ENCODE measurements at regions of chr4 and their contacts with region 1.

Region 1: GRCh38 chr4:163544407-163545038 is 50.0 kb downstream of the TMA16 start:
- DNase-seq: peak; percentile 85
- H3K4me3 ChIP-seq: no peak overlapping the region
- H3K27ac ChIP-seq: no peak overlapping the region
- H3K4me1 ChIP-seq: no peaks in the 10 kb centered on the region
- H3K27me3 ChIP-seq: no peaks in the 10 kb centered on the region
- CTCF ChIP-seq: peak; percentile 97

Region 2: GRCh38 chr4:163042306-163042705 is 502.2 kb before region 1 on chr4:
- CTCF ChIA-PET with region 1: interaction called, 11 read pairs
- POLR2A ChIA-PET with region 1: no interaction called
- intact Hi-C with region 1: loop called (anchors 5 kb)
- DNase-seq: no peak
- H3K4me3 ChIP-seq: no peak overlapping the region
- H3K27ac ChIP-seq: no peak overlapping the region
- H3K4me1 ChIP-seq: no peaks in the 10 kb centered on the region
- H3K27me3 ChIP-seq: no peaks in the 10 kb centered on the region
- CTCF ChIP-seq: no peak

Region 3: GRCh38 chr4:163107754-163108153 is 436.8 kb before region 1 on chr4:
- CTCF ChIA-PET with region 1: no interaction called
- POLR2A ChIA-PET with region 1: no interaction called
- intact Hi-C with region 1: loop called (anchors 1 kb)
- DNase-seq: peak; percentile 54
- H3K4me3 ChIP-seq: no peak overlapping the region
- H3K27ac ChIP-seq: no peak overlapping the region
- H3K4me1 ChIP-seq: no peaks in the 10 kb centered on the region
- H3K27me3 ChIP-seq: no peaks in the 10 kb centered on the region
- CTCF ChIP-seq: peak; percentile 57

Region 4: GRCh38 chr4:163332500-163333406 is 211.8 kb before region 1 on chr4 and contains the start of gene NPY1R:
- CTCF ChIA-PET with region 1: no interaction called
- POLR2A ChIA-PET with region 1: no interaction called
- intact Hi-C with region 1: loop called (anchors 5 kb)
- DNase-seq: peak; percentile 91
- H3K4me3 ChIP-seq: peak within 1 kb of the TSS; percentile 75
- H3K27ac ChIP-seq: peak within 1 kb of the TSS; percentile 76
- H3K4me1 ChIP-seq: peaks cover 9% of the 10 kb centered on the region
- H3K27me3 ChIP-seq: no peaks in the 10 kb centered on the region
- CTCF ChIP-seq: peak; percentile 83
- total RNA-seq, gene NPY1R: 59.8 and 64.4 TPM in 2 replicates

Region 5: DNA sequence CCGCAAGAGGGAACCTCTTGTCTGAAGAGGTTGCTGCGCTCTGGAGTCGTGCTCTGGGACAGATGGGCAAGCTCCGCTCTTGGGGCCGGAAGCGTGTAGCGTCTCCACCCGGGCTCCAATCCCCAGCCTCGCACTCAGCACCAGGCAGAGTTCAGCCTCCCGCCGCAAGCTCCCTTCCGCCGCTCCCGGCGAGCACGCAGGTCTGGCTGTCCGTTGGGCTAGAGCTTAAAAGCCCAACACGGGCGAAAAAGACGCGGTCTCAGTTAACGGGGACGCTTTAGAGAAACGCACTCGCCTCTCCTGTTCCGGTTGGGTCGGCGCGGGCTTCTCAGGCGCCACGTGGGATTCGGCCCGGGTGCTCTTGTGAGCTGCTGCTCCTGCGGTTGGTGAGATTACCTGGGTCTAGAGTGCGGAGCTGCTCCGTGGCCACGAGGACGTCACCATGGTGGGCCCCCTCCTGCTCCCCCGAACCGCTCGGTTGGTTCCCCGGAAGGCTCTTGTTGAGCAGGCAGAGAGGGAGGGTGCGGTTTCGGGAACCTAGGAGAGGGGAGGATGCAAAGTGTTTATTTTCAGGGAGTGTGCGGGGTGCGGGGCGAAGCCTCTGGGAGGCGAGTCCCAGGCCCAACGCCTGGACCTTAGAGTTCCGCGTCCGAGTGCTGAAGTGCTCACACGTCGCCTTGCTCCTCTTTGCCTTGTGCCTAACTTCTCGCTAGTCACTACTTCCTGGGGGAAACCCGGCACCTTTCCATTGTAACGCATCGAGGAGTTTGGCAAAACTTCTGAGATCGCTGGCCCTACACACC is 50.0 kb before region 1 on chr4 and contains the start of gene TMA16:
- CTCF ChIA-PET with region 1: interaction called, 12 read pairs
- POLR2A ChIA-PET with region 1: no interaction called
- intact Hi-C with region 1: no loop called
- DNase-seq: peak; percentile 97
- H3K4me3 ChIP-seq: peak within 1 kb of the TSS; percentile 90
- H3K27ac ChIP-seq: peak within 1 kb of the TSS; percentile 98
- H3K4me1 ChIP-seq: peaks cover 3% of the 10 kb centered on the region
- H3K27me3 ChIP-seq: no peaks in the 10 kb centered on the region
- CTCF ChIP-seq: no peak
- total RNA-seq, gene TMA16: 83.5 and 84.8 TPM in 2 replicates

Region 6: GRCh38 chr4:164261831-164262230 is 717.3 kb after region 1 on chr4:
- CTCF ChIA-PET with region 1: no interaction called
- POLR2A ChIA-PET with region 1: no interaction called
- intact Hi-C with region 1: no loop called
- DNase-seq: no peak
- H3K4me3 ChIP-seq: no peak overlapping the region
- H3K27ac ChIP-seq: no peak overlapping the region
- H3K4me1 ChIP-seq: no peaks in the 10 kb centered on the region
- H3K27me3 ChIP-seq: no peaks in the 10 kb centered on the region
- CTCF ChIP-seq: no peak